Endothelial cell of umbilical vein (primary cell): ENCODE measurements at regions of chr17 and their contacts with region 1.

Region 1: DNA sequence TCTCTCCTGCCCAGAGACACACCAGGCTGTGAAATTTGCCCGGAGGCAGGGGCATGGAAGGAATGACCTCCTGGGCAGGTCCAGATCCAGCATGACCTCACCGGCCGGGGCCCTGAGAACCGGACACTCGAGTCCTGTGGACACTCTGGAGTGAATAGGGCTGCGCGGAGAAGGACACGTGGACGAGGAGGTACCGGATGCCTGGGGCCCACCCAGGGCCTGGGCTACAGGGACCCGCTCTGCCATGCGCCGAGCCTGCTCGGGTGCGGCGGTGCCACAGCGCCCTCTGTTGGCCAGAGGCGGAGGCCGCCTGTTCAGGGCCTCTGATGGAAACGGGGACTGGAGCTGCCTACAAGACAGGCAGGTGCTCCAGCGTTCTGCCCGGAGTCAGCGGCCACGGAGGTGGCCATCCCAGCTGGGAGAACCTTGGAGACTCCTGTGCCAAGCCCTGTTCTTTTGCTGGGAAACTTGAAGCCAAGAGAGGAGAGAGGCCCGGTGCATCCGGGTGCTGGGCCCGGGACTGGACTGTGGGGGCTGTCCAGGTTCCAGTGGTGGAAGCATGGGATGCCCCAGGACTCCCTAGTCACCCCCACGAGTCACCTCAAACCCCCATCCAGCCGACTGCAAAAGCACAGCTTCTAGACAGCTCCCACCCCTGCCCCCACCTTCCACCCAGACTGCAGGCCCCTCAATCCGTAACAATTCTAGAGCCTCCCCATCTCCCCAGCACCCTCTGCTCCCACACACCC is 19.3 kb upstream of the NXPH3 start:
- DNase-seq: peak; percentile 66
- H3K4me3 ChIP-seq: no peak overlapping the region
- H3K27ac ChIP-seq: no peak overlapping the region
- H3K4me1 ChIP-seq: peaks cover 2% of the 10 kb centered on the region
- H3K27me3 ChIP-seq: no peaks in the 10 kb centered on the region
- CTCF ChIP-seq: peak; percentile 98 to 99
- POLR2A ChIP-seq: no peak

Region 2: DNA sequence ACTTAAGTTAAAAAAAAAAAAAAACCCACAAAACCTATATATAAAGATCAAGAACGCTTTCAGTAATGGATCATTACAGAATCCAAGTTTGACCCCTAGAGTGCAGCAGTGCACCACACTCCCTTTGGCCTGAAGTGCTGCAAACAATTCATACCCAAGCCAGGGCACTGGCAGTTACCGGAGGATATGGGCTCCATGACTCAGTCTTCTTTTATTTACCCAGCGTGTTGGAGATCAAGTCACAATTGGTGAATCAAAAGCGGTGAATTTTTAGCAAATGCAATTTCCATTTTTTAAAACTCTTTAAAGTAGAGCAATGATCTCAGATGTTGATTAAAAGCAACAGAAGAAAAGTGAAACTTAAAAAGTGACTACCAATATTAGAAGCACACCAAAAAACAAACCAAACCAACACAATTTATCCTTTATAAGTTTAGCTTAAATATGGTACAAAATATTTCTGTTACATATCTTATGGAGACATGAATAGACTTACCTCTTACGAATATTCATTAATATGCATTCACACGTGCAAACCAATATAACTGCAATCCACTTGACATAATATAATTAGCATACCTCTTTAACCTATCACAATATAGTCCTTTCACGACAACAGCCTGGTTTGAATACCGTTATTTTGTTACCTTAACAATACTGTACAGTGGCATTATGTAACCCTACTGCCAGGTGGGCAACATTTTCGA is 240.7 kb before region 1 on chr17:
- CTCF ChIA-PET with region 1: interaction called, 15 read pairs
- POLR2A ChIA-PET with region 1: no interaction called
- dilution Hi-C with region 1: no loop called
- intact Hi-C with region 1: loop called (anchors 1 kb)
- DNase-seq: peak; percentile 94
- H3K4me3 ChIP-seq: no peak overlapping the region
- H3K27ac ChIP-seq: no peak overlapping the region
- H3K4me1 ChIP-seq: peaks cover 11% of the 10 kb centered on the region
- H3K27me3 ChIP-seq: no peaks in the 10 kb centered on the region
- CTCF ChIP-seq: peak; percentile 64 to 78
- POLR2A ChIP-seq: no peak

Region 3: GRCh38 chr17:49407981-49408501 is 148.4 kb before region 1 on chr17:
- CTCF ChIA-PET with region 1: interaction called, 116 read pairs
- POLR2A ChIA-PET with region 1: no interaction called
- dilution Hi-C with region 1: no loop called
- intact Hi-C with region 1: loop called (anchors 1 kb)
- DNase-seq: peak; percentile 65
- H3K4me3 ChIP-seq: no peak overlapping the region
- H3K27ac ChIP-seq: no peak overlapping the region
- H3K4me1 ChIP-seq: no peaks in the 10 kb centered on the region
- H3K27me3 ChIP-seq: no peaks in the 10 kb centered on the region
- CTCF ChIP-seq: peak; percentile 92 to 94
- POLR2A ChIP-seq: no peak

Region 4: DNA sequence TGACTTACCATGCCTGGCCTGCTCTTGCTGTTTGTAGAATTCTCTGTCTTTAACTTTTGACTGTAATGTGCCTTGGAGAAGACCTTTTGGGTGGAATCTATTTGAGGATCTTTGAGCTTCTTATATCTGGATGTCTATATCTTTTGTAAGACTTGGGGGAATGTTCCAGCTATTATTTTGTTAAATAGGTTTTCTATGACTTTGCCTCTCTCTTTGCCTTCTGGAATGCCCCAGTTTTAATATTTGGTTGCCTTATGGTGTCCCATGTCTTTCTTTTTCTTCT is 131.5 kb before region 1 on chr17:
- CTCF ChIA-PET with region 1: interaction called, 12 read pairs
- POLR2A ChIA-PET with region 1: no interaction called
- dilution Hi-C with region 1: no loop called
- intact Hi-C with region 1: no loop called
- DNase-seq: no peak
- H3K4me3 ChIP-seq: no peak overlapping the region
- H3K27ac ChIP-seq: no peak overlapping the region
- H3K4me1 ChIP-seq: no peaks in the 10 kb centered on the region
- H3K27me3 ChIP-seq: peaks cover 5 to 6% of the 10 kb centered on the region in 2 experiments
- CTCF ChIP-seq: no peak
- POLR2A ChIP-seq: no peak

Region 5: DNA sequence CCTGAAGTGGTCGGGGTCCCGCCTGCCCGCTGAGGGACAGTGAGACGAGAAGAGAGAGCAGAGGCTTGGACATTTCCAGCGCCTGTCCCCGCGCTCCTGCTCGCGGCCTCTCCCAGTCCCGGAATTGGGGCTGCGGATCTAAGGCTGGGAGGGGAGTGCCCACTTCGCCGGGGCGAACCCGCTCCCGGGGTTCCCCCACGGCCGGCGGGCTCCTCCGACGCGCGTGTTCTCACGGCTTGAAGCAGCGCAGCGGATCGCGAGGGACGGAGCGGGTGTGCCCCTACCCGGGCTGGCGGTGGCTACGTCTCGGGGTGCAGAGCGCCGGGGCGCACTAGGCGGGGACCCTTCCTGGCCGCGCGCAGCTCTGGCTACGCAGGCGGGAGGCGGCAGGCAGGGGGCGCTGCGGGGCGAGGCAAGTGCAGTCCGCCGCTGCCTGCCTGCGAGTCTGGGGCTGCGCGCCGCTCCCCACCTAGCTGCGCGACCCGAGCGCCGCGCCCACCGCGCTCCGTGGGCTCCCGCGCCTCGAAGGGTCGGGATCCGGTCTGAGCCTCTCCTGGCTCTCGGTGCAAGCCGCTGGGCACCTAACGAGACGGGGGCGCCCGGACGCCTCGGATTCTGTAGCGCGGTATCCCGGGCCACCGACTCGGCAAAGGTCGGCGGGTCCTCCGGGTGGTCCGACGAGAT is 60.1 kb before region 1 on chr17:
- CTCF ChIA-PET with region 1: interaction called, 27 read pairs
- POLR2A ChIA-PET with region 1: no interaction called
- dilution Hi-C with region 1: no loop called
- intact Hi-C with region 1: loop called (anchors 1 kb)
- DNase-seq: peak; percentile 25
- H3K4me3 ChIP-seq: no peak overlapping the region
- H3K27ac ChIP-seq: no peak overlapping the region
- H3K4me1 ChIP-seq: peaks cover 10% of the 10 kb centered on the region
- H3K27me3 ChIP-seq: peaks cover 67 to 70% of the 10 kb centered on the region in 2 experiments
- CTCF ChIP-seq: peak; percentile 79
- POLR2A ChIP-seq: no peak

Region 6: GRCh38 chr17:49694847-49695683 is 138.7 kb after region 1 on chr17:
- CTCF ChIA-PET with region 1: interaction called, 20 read pairs
- POLR2A ChIA-PET with region 1: no interaction called
- dilution Hi-C with region 1: no loop called
- intact Hi-C with region 1: no loop called
- DNase-seq: peak; percentile 31
- H3K4me3 ChIP-seq: no peak overlapping the region
- H3K27ac ChIP-seq: no peak overlapping the region
- H3K4me1 ChIP-seq: peaks cover 16% of the 10 kb centered on the region
- H3K27me3 ChIP-seq: no peaks in the 10 kb centered on the region
- CTCF ChIP-seq: peak; percentile 77 to 92
- POLR2A ChIP-seq: no peak

Region 7: GRCh38 chr17:49851387-49852291 is 295.2 kb after region 1 on chr17:
- CTCF ChIA-PET with region 1: interaction called, 14 read pairs
- POLR2A ChIA-PET with region 1: no interaction called
- dilution Hi-C with region 1: no loop called
- intact Hi-C with region 1: no loop called
- DNase-seq: peak; percentile 73
- H3K4me3 ChIP-seq: peak overlapping the region; percentile 18 to 41 (median 36)
- H3K27ac ChIP-seq: peak overlapping the region; percentile 1
- H3K4me1 ChIP-seq: peaks cover 6% of the 10 kb centered on the region
- H3K27me3 ChIP-seq: no peaks in the 10 kb centered on the region
- CTCF ChIP-seq: peak; percentile 71 to 92
- POLR2A ChIP-seq: no peak